ENCODE measurements at regions of chr5 and their contacts with region 1.

Region 1: DNA sequence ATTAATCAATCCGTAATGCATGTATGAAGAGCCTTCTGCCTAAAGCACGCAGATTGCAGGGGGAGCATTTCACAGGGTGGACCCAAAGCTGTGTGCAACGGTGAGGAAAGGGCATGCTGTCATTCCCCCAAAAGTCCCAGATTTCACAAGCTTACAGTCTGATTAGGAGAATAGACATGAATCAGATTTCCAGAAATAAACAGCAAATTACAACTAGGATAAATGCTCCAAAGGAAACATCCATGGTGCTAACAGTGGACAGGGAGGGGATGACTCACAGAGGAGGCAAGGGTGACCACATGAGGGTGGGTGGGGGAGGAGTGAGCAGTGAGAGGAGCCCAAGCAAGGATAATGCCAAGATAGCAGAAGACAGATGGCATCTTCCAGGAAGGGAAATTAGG is 258.4 kb upstream of the TAS2R1 start:
- DNase-seq: no peak
- H3K4me3 ChIP-seq: no peak overlapping the region
- H3K27ac ChIP-seq: no peak overlapping the region
- H3K4me1 ChIP-seq: no peaks in the 10 kb centered on the region
- H3K27me3 ChIP-seq: no peaks in the 10 kb centered on the region
- CTCF ChIP-seq: no peak
- POLR2A ChIP-seq: no peak

Region 2: DNA sequence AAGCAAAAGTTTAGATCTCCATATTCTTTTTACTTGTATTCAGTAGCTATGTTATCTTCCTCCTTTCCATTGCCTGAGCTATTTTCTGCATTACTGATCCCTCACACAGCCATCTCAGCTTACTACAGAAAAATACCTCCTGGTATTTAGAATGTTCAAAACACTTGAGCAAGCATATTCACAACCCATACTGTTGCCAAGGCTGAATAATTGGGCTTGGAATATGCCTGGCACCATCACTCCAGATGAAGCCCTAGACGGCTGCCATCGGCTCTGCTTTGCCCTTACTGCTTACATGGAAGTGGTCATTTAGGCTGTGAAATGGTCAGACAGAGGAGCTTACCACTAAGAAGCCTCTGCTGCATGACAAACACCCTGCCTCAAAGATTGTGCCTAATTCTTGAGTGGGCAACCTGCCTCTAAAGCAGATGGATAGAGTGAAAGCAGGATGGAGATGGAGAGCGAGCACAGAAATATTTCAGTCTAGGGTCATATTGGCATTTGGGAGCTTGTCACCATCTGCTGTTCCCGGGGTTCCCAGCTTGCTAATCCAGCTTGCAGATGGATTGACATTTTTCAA is 165.8 kb before region 1 on chr5:
- intact Hi-C with region 1: no loop called
- DNase-seq: no peak
- H3K4me3 ChIP-seq: no peak overlapping the region
- H3K27ac ChIP-seq: no peak overlapping the region
- H3K4me1 ChIP-seq: no peaks in the 10 kb centered on the region
- H3K27me3 ChIP-seq: no peaks in the 10 kb centered on the region
- CTCF ChIP-seq: no peak
- POLR2A ChIP-seq: no peak

Region 3: GRCh38 chr5:9869616-9870288 is 18.7 kb before region 1 on chr5:
- intact Hi-C with region 1: loop called (anchors 1 kb)
- DNase-seq: no peak
- H3K4me3 ChIP-seq: no peak overlapping the region
- H3K27ac ChIP-seq: no peak overlapping the region
- H3K4me1 ChIP-seq: no peaks in the 10 kb centered on the region
- H3K27me3 ChIP-seq: no peaks in the 10 kb centered on the region
- CTCF ChIP-seq: no peak
- POLR2A ChIP-seq: no peak

Region 4: GRCh38 chr5:11075035-11075805 is 1186.7 kb after region 1 on chr5:
- intact Hi-C with region 1: loop called (anchors 5 kb)
- DNase-seq: no peak
- H3K4me3 ChIP-seq: no peak overlapping the region
- H3K27ac ChIP-seq: peak overlapping the region in 1 of 2 donors; percentile 5
- H3K4me1 ChIP-seq: no peaks in the 10 kb centered on the region
- H3K27me3 ChIP-seq: no peaks in the 10 kb centered on the region
- CTCF ChIP-seq: no peak
- POLR2A ChIP-seq: no peak